ENCODE measurements at regions of chr18 and their contacts with region 1.

Region 1: DNA sequence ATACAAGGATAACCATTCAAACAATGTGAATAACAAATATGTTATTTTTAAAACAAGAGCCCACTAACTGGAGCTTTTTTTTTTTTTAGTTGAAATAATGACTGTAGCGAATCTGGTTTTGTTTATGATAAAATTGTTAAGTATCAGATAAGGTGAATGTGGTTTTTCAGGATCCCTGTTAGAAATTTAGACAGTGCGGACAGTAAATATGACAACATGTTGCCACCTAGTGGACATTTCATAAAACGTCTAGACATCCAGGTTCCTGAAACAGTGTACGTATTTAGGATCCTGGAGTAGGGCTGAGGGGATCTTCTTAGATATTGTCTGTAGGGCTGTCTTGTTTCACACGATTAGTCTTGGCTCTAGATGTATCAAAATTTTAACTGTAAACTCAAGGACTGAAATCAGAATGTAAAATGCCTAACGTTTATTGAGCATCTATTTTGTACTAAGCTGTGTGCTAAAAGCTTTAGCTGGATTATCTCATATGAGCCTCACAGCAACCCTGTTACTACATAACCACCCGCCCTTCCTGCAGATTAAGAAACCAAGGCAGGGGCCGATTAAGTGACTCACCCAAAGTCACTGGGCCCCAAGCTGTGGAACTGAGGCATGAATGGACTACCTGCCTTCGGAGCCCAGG is 23.9 kb upstream of the CCDC68 start:
- DNase-seq: peak in 2 of 9 experiments; percentile 44 to 61
- ATAC-seq: no peak
- H3K4me3 ChIP-seq: no peak overlapping the region
- H3K4me3 Mint-ChIP-seq: no peak overlapping the region
- H3K27ac ChIP-seq: no peak overlapping the region
- H3K27ac Mint-ChIP-seq: no peak overlapping the region
- H3K4me1 ChIP-seq: no peaks in the 10 kb centered on the region
- H3K4me1 Mint-ChIP-seq: no peaks in the 10 kb centered on the region
- H3K27me3 ChIP-seq: no peaks in the 10 kb centered on the region
- H3K27me3 Mint-ChIP-seq: peaks cover 8% of the 10 kb centered on the region
- CTCF ChIP-seq: peak; percentile 68

Region 2: GRCh38 chr18:54392543-54393023 is 590.6 kb before region 1 on chr18:
- CTCF ChIA-PET with region 1: no interaction called
- POLR2A ChIA-PET with region 1: no interaction called
- intact Hi-C with region 1: loop called in 1 of 2 experiments (anchors 2 kb)
- DNase-seq: peak in 2 of 9 experiments; percentile 58 to 69
- ATAC-seq: peak; percentile 56
- H3K4me3 ChIP-seq: no peak overlapping the region
- H3K4me3 Mint-ChIP-seq: no peak overlapping the region
- H3K27ac ChIP-seq: no peak overlapping the region
- H3K27ac Mint-ChIP-seq: no peak overlapping the region
- H3K4me1 ChIP-seq: no peaks in the 10 kb centered on the region
- H3K4me1 Mint-ChIP-seq: peaks cover 4% of the 10 kb centered on the region
- H3K27me3 ChIP-seq: no peaks in the 10 kb centered on the region
- H3K27me3 Mint-ChIP-seq: peaks cover 11% of the 10 kb centered on the region
- CTCF ChIP-seq: peak; percentile 91

Region 3: DNA sequence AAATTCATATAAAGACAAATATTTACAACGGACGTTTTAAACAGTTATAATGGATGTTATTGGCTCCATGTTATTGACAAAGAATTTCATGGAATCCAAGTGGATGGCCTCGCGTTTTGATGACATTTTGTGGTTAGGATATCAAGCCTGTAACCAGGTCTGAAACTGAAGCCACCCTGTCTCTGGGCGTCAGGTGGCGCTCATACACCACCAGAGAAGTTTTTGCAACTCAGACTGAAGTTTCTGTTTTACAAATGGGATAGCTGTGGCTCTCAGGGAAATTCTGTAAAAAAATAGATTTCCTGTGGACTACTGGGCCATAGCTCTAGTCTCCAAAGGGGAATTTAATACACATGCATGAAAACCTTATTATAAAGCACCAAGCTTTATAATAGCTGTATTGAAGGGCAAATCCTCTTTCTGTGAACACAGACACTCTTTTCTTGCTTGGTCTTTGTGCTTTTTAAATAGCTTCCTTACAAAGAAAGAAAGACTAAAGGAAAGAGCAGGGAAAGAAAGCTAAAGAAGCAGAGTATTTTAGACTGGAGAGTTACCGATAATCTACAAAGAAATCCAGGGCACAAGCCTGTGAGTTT is 538.7 kb before region 1 on chr18:
- CTCF ChIA-PET with region 1: no interaction called
- POLR2A ChIA-PET with region 1: no interaction called
- intact Hi-C with region 1: loop called in 1 of 2 experiments (anchors 5 kb)
- DNase-seq: peak in 2 of 9 experiments; percentile 6 to 29
- ATAC-seq: no peak
- H3K4me3 ChIP-seq: no peak overlapping the region
- H3K4me3 Mint-ChIP-seq: no peak overlapping the region
- H3K27ac ChIP-seq: no peak overlapping the region
- H3K27ac Mint-ChIP-seq: no peak overlapping the region
- H3K4me1 ChIP-seq: no peaks in the 10 kb centered on the region
- H3K4me1 Mint-ChIP-seq: no peaks in the 10 kb centered on the region
- H3K27me3 ChIP-seq: no peaks in the 10 kb centered on the region
- H3K27me3 Mint-ChIP-seq: peaks cover 27% of the 10 kb centered on the region
- CTCF ChIP-seq: peak; percentile 18

Region 4: GRCh38 chr18:54558609-54559585 is 424.3 kb before region 1 on chr18:
- CTCF ChIA-PET with region 1: interaction called, 4 read pairs
- POLR2A ChIA-PET with region 1: no interaction called
- intact Hi-C with region 1: loop called (anchors 2 kb)
- DNase-seq: peak in 2 of 9 experiments; percentile 13 to 31
- ATAC-seq: no peak
- H3K4me3 ChIP-seq: no peak overlapping the region
- H3K4me3 Mint-ChIP-seq: no peak overlapping the region
- H3K27ac ChIP-seq: no peak overlapping the region
- H3K27ac Mint-ChIP-seq: no peak overlapping the region
- H3K4me1 ChIP-seq: no peaks in the 10 kb centered on the region
- H3K4me1 Mint-ChIP-seq: no peaks in the 10 kb centered on the region
- H3K27me3 ChIP-seq: no peaks in the 10 kb centered on the region
- H3K27me3 Mint-ChIP-seq: no peaks in the 10 kb centered on the region
- CTCF ChIP-seq: peak; percentile 55

Region 5: DNA sequence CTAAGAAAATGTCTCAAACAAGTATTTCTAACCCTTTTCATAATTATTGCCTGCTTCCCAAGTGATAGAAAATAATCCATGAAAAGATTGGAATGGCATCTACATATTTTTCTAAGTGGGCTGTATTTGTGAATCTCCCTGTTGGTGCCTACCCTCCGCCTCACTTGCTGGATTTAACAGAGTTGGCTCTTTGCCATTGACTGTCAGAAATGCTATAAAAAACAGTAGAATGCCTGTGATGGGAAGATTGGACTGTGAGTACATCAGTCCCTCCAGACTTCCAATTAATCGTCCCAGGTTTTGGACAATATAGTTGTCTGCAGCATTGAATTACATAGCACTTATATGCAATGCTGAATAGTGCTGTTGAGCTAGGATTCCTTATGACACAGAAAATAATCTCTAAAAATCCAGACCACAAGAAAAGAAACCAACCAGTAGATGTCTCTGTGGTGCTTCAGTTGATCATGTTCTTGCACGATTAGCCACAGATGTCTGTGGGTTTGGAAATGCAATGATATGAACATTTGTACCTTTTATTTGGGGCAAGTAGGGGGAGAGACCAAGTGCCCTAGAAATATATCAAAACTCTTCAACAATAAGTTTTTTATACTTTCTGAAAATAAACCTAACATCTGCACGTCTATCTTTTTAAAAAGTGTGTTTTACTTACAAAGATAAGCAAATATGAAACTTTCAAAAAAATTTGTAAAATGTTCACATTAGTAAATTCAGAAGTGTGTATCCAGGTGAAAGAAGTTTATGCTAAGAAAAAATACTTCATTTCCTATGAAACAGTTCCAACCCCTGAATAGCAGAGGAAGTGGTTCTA is 303.6 kb before region 1 on chr18:
- CTCF ChIA-PET with region 1: interaction called, 9 read pairs
- POLR2A ChIA-PET with region 1: no interaction called
- intact Hi-C with region 1: loop called in 1 of 2 experiments (anchors 2 kb)
- DNase-seq: peak in 2 of 9 experiments; percentile 47 to 58
- ATAC-seq: no peak
- H3K4me3 ChIP-seq: no peak overlapping the region
- H3K4me3 Mint-ChIP-seq: no peak overlapping the region
- H3K27ac ChIP-seq: no peak overlapping the region
- H3K27ac Mint-ChIP-seq: no peak overlapping the region
- H3K4me1 ChIP-seq: no peaks in the 10 kb centered on the region
- H3K4me1 Mint-ChIP-seq: no peaks in the 10 kb centered on the region
- H3K27me3 ChIP-seq: no peaks in the 10 kb centered on the region
- H3K27me3 Mint-ChIP-seq: peaks cover 2% of the 10 kb centered on the region
- CTCF ChIP-seq: no peak

Region 6: DNA sequence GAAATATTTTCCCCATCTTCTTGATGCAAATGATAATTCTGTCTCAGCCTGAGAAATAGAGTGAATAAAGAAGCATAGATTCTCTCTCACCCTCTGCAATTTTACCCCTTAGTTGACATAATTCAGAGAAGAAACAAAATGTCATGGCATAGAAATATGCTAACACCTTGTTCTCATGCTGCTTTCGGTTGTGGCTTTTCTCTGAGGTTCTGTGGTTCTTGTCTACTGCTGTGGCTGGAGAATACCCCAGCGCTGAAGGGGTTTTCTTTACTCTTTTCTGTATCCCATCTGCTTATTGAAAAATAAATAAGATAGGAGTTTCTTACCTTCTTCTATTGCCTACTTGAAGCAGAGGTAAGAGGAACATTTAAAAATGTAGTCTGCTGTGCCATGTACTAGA is 170.3 kb before region 1 on chr18:
- CTCF ChIA-PET with region 1: no interaction called
- POLR2A ChIA-PET with region 1: no interaction called
- intact Hi-C with region 1: no loop called
- DNase-seq: peak in 2 of 9 experiments; percentile 44 to 58
- ATAC-seq: no peak
- H3K4me3 ChIP-seq: no peak overlapping the region
- H3K4me3 Mint-ChIP-seq: no peak overlapping the region
- H3K27ac ChIP-seq: no peak overlapping the region
- H3K27ac Mint-ChIP-seq: no peak overlapping the region
- H3K4me1 ChIP-seq: no peaks in the 10 kb centered on the region
- H3K4me1 Mint-ChIP-seq: peaks cover 4% of the 10 kb centered on the region
- H3K27me3 ChIP-seq: no peaks in the 10 kb centered on the region
- H3K27me3 Mint-ChIP-seq: peaks cover 2% of the 10 kb centered on the region
- CTCF ChIP-seq: no peak

Region 7: DNA sequence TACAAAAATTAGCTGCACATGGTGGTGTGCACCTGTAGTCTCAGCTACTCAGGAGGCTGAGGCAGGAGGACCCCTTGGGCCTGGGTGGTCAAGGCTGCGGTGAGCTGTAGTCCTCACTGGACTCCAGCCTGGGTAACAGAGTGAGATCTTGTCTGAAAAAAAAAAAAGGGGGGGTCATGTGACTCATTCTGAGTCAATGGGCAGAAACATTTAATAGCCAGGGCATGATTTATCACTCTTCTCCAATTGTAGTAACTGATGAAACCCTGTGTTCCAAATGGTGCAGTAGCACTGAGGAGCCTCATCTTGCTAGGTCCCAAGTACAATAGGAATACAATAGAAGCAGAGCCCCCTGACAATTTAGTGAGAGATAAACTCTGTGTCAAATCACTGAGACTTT is 55.0 kb after region 1 on chr18:
- CTCF ChIA-PET with region 1: no interaction called
- POLR2A ChIA-PET with region 1: no interaction called
- intact Hi-C with region 1: no loop called
- DNase-seq: no peak
- ATAC-seq: no peak
- H3K4me3 ChIP-seq: no peak overlapping the region
- H3K4me3 Mint-ChIP-seq: no peak overlapping the region
- H3K27ac ChIP-seq: no peak overlapping the region
- H3K27ac Mint-ChIP-seq: no peak overlapping the region
- H3K4me1 ChIP-seq: no peaks in the 10 kb centered on the region
- H3K4me1 Mint-ChIP-seq: no peaks in the 10 kb centered on the region
- H3K27me3 ChIP-seq: no peaks in the 10 kb centered on the region
- H3K27me3 Mint-ChIP-seq: peaks cover 2% of the 10 kb centered on the region
- CTCF ChIP-seq: no peak

Region 8: DNA sequence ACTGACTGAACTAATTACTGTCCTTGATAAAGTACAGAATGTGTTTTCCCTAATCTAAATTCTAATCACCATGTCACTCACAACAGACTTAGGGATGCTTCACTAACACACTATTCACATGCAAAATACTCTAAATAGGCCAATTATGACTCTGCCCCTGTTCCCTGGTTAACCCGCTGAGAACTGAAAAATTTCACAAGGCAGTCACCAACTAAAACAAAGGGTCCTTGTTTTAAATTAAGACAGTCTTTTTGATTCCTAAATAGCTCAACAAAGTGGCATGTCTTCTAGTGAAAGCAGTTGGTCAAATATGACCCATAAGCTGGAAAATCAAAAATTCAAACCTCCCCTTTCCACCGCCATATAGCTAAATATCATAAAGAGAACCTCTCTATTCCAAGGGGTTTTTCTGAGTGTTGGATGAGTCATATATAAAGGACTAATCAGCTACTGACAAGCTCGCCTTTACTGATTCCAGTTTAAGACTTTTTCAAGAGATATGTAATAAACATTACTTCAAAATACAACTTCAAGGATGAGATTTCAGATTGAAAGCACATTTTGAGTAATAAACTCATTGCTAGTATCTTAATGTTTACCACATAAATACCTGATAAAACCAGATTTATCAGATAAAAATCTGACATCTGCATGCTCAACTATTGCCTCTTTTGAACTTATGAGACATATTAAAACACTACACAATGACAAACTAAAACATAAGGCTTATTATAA is 369.0 kb after region 1 on chr18:
- CTCF ChIA-PET with region 1: no interaction called
- POLR2A ChIA-PET with region 1: no interaction called
- intact Hi-C with region 1: no loop called
- DNase-seq: no peak
- ATAC-seq: no peak
- H3K4me3 ChIP-seq: no peak overlapping the region
- H3K4me3 Mint-ChIP-seq: no peak overlapping the region
- H3K27ac ChIP-seq: no peak overlapping the region
- H3K27ac Mint-ChIP-seq: no peak overlapping the region
- H3K4me1 ChIP-seq: no peaks in the 10 kb centered on the region
- H3K4me1 Mint-ChIP-seq: no peaks in the 10 kb centered on the region
- H3K27me3 ChIP-seq: no peaks in the 10 kb centered on the region
- H3K27me3 Mint-ChIP-seq: peaks cover 2% of the 10 kb centered on the region
- CTCF ChIP-seq: no peak